HepG2 (cell line): ENCODE measurements at regions of chr1 and their contacts with region 1.

Region 1: DNA sequence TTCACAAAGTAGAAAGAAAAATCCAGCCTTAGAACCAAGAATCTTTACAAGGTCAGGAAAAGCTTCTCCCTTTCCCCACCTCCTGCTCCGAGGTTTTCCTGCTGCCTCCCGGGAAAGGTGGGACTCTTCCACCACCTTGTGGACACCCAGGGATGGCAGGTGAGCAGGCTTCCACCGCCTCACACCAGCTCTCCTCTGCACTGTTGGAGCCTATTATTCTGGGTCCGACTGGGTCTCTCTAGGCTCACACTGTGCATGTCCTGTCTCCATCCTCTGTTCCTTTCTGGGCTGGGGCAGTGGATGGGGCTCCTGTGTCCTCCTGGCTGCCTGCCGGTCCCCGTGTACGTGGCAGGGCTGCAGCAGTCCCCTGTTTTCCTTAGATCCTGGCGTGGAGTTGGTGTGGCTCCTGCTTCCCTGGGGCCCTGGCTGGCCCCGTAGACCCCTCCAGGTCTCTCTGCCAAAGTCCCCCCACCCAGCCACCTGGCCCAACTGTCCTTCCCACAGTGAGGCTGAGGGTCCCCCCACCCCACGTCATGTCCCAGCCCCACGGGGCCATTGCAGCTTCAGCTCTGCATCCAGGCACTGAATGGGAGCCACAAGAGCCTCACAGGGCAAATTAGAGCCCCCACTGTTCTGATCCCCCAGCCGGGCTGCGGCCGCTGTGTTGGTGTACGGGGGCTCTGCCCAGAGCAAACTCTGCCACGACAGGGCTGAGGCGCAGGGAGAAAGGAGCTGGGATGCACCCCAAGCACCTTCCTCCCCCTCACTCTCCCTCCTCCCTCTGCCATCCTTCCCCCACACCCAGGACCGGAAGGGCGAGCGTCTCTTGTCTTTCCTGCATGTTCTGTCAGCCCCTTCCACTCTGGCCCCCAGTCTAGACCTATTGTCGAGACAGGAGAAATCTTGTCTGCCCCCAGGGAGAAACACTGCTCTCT is 3.3 kb upstream of the SLC45A1 start:
- DNase-seq: peak; percentile 73
- ATAC-seq: peak; percentile 83
- H3K4me3 ChIP-seq: peak overlapping the region; percentile 24 to 64 (median 37); a peak in 5 of 6 replicates
- H3K27ac ChIP-seq: no peak overlapping the region
- H3K4me1 ChIP-seq: peaks cover 66% of the 10 kb centered on the region
- H3K27me3 ChIP-seq: peaks cover 2 to 6% of the 10 kb centered on the region in 2 experiments; a peak in 1 of 5 replicates
- CTCF ChIP-seq: peak; percentile 99
- EP300 ChIP-seq: 0 out of 4 replicates have a peak, but pooled peaks of 1 of the 2 experiments have one; percentile 28
- POLR2A ChIP-seq: no peak
- RAD21 ChIP-seq: peak; percentile 96

Region 2: DNA sequence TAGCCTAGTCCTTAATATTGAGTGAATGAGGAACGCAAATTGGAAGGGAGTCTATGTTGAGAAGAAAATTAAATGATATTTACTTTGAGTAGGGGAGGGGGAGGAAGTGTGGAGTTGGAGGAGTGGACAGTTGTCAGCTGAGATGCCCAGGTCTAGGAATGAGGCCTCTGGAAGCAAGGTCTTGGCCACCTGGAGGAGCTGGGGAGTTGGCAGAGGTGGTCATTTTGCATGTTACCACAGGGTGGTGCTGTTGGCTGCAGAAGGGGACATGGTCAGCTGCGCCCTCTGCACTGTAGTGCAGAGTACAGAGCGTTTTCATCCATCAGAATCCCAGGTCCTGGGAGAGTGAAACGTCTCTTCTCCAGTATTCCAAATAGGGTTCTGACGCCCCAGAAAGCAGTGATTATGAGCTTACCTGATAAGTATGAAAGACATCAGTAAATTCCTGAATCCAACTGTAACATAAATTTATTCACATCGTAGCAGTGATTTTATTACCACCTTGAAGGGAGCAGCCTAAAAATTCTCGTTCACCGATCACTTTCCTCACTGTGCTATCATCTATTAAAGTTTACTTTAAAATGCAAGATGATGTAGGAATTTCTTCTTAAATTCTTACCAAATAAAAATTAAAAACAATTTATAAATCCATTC is 339.3 kb before region 1 on chr1:
- CTCF ChIA-PET with region 1: interaction called, 35 read pairs
- POLR2A ChIA-PET with region 1: interaction called, 7 read pairs
- in situ Hi-C with region 1: loop called (anchors 5 kb)
- intact Hi-C with region 1: loop called (anchors 2 kb)
- DNase-seq: peak; percentile 76
- ATAC-seq: peak; percentile 100
- H3K4me3 ChIP-seq: no peak overlapping the region
- H3K27ac ChIP-seq: no peak overlapping the region
- H3K4me1 ChIP-seq: no peaks in the 10 kb centered on the region
- H3K27me3 ChIP-seq: no peaks in the 10 kb centered on the region
- CTCF ChIP-seq: peak; percentile 97
- EP300 ChIP-seq: no peak; a peak in 1 of 4 replicates
- POLR2A ChIP-seq: 0 out of 4 replicates have a peak, but pooled peaks of 1 of the 2 experiments have one; percentile 23
- RAD21 ChIP-seq: peak; percentile 96

Region 3: GRCh38 chr1:8015036-8015808 is 299.4 kb before region 1 on chr1:
- CTCF ChIA-PET with region 1: interaction called, 17 read pairs
- POLR2A ChIA-PET with region 1: interaction called, 54 read pairs
- in situ Hi-C with region 1: loop called (anchors 10 kb)
- intact Hi-C with region 1: no loop called
- DNase-seq: peak; percentile 66
- ATAC-seq: peak; percentile 18; the same call in 2 of the 3 replicates
- H3K4me3 ChIP-seq: no peak overlapping the region; a peak in 1 of 6 replicates
- H3K27ac ChIP-seq: peak overlapping the region; percentile 28
- H3K4me1 ChIP-seq: peaks cover 80% of the 10 kb centered on the region
- H3K27me3 ChIP-seq: no peaks in the 10 kb centered on the region
- CTCF ChIP-seq: peak; percentile 50; the same call in 1 of the 2 replicates
- EP300 ChIP-seq: 0 out of 4 replicates have a peak, but pooled peaks of 1 of the 2 experiments have one; percentile 12
- POLR2A ChIP-seq: peak; percentile 40 to 45; a peak in 3 of 4 replicates
- RAD21 ChIP-seq: peak; percentile 54; the same call in 1 of the 2 replicates

Region 4: DNA sequence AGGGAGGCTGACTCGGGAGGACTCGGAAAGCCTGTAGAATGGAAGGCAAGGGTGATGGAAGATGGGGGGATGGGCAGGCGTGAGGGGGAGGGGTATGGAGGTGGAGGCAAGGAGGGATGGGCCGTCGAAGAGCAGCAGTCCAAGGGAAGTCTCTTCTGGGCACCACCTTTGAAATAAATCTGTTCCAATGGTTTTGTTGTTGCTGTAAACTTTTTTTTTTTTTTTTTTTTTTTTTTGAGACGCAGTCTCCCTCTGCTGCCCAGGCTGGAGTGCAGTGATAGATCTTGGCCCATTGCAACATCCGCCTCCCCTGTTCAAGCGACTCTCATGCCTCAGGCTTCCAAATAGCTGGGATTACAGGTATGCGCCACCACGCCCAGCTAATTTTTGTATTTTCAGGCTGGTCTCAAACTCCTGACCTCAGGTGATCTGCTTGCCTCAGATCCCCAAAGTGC is 75.7 kb before region 1 on chr1:
- CTCF ChIA-PET with region 1: interaction called, 3 read pairs
- POLR2A ChIA-PET with region 1: interaction called, 8 read pairs
- in situ Hi-C with region 1: no loop called
- intact Hi-C with region 1: loop called (anchors 1 kb)
- DNase-seq: peak; percentile 79
- ATAC-seq: peak; percentile 57
- H3K4me3 ChIP-seq: peak overlapping the region in 2 of 3 experiments; percentile 2 to 42; a peak in 3 of 6 replicates
- H3K27ac ChIP-seq: peak overlapping the region; percentile 84
- H3K4me1 ChIP-seq: peaks cover 58% of the 10 kb centered on the region
- H3K27me3 ChIP-seq: no peaks in the 10 kb centered on the region
- CTCF ChIP-seq: peak; percentile 53; the same call in 1 of the 2 replicates
- EP300 ChIP-seq: no peak; a peak in 1 of 4 replicates
- POLR2A ChIP-seq: no peak
- RAD21 ChIP-seq: no peak

Region 5: DNA sequence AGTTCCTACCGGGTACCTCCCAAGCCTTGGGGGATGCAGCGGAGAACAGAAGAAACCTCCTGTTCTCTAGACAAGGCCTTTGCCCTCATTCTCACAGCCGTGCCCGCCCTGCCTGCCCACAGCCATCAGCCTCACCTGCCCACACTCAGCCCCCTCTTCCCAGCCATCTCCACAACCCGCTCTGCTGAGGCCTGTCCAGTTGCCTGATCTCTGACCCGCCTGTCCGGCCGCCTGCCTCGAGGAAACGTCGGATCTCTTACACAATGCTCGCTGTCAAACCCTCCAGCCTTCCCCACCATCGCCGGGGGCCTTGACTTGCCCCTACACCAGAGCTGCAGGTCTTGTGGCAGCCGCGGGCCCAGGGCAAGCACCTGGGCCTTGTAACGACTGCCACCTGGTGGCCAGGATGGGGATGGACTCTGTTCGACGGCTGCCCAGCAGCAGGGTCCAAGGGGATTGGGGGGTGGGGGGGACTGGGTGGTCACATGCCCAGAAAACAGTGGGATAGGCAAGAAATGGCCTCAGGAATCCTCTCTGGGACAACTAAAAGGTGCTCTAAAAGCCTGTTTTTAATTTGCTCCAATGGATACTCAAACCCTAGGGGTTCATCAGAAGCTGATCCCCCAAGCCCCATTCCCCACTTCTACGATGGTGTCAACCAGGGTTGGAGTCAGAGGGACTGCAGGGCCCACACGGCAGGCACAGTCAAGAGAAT is 34.3 kb after region 1 on chr1:
- CTCF ChIA-PET with region 1: interaction called, 4 read pairs
- POLR2A ChIA-PET with region 1: no interaction called
- in situ Hi-C with region 1: no loop called
- intact Hi-C with region 1: loop called (anchors 2 kb)
- DNase-seq: peak; percentile 48
- ATAC-seq: peak; percentile 60
- H3K4me3 ChIP-seq: peak overlapping the region in 1 of 3 experiments; percentile 50; a peak in 1 of 6 replicates
- H3K27ac ChIP-seq: no peak overlapping the region
- H3K4me1 ChIP-seq: peaks cover 32% of the 10 kb centered on the region
- H3K27me3 ChIP-seq: peaks cover 0 to 20% of the 10 kb centered on the region in 2 experiments; a peak in 4 of 5 replicates
- CTCF ChIP-seq: peak; percentile 92
- EP300 ChIP-seq: no peak
- POLR2A ChIP-seq: no peak
- RAD21 ChIP-seq: peak; percentile 87